ENCODE measurements at regions of chr3 and their contacts with region 1.

Region 1: DNA sequence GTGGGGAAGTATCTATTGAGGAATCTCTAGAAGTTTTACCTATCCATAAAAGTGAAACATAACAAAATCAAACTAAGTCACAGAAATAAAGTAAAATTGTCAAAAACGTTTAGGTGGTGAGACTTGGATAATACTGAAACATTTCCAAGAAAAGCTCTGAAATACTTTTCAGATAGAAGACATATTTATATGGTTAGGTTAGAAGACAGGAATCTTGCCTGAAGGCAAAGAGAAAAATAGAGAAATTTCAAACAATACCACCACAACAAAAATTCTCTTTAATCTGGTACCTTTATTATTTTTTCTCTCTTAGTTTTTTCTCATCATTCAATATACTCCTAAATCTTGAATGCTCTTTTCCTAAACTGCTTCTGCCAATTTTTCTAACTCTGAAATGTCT is 222.7 kb upstream of the PLSCR5 start:
- DNase-seq: no peak
- ATAC-seq: no peak
- H3K4me3 ChIP-seq: no peak overlapping the region
- H3K27ac ChIP-seq: no peak overlapping the region
- H3K4me1 ChIP-seq: no peaks in the 10 kb centered on the region
- H3K27me3 ChIP-seq: no peaks in the 10 kb centered on the region
- CTCF ChIP-seq: no peak
- POLR2A ChIP-seq: no peak
- RAD21 ChIP-seq: no peak

Region 2: DNA sequence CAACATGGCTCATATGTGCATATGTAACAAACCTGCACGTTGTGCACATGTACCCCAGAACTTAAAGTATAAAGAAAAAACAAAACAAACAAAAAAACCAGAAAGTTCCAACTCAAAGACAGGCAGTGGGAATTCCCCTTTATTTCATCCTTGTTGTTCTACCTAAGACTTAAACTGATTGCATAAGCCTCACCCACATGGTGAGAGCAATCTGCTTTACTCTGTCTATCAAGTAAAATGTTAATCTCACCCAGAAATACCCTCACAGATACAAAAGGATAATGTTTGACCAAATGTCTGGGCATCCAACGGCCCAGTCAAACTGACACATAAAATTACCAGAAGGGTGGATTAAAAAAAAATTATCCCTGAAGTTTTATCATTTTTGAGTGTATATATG is 31.8 kb before region 1 on chr3:
- CTCF ChIA-PET with region 1: no interaction called
- POLR2A ChIA-PET with region 1: no interaction called
- RAD21 ChIA-PET with region 1: no interaction called
- intact Hi-C with region 1: loop called (anchors 1 kb)
- DNase-seq: no peak
- ATAC-seq: no peak
- H3K4me3 ChIP-seq: no peak overlapping the region
- H3K27ac ChIP-seq: no peak overlapping the region
- H3K4me1 ChIP-seq: no peaks in the 10 kb centered on the region
- H3K27me3 ChIP-seq: no peaks in the 10 kb centered on the region
- CTCF ChIP-seq: no peak
- POLR2A ChIP-seq: no peak
- RAD21 ChIP-seq: no peak

Region 3: GRCh38 chr3:146912241-146913015 is 84.6 kb after region 1 on chr3:
- CTCF ChIA-PET with region 1: no interaction called
- POLR2A ChIA-PET with region 1: no interaction called
- RAD21 ChIA-PET with region 1: no interaction called
- intact Hi-C with region 1: no loop called
- DNase-seq: no peak
- ATAC-seq: no peak
- H3K4me3 ChIP-seq: no peak overlapping the region
- H3K27ac ChIP-seq: no peak overlapping the region
- H3K4me1 ChIP-seq: no peaks in the 10 kb centered on the region
- H3K27me3 ChIP-seq: no peaks in the 10 kb centered on the region
- CTCF ChIP-seq: no peak
- POLR2A ChIP-seq: no peak
- RAD21 ChIP-seq: no peak